Calu3 (cell line): ENCODE measurements at regions of chr5 and their contacts with region 1.

Region 1: GRCh38 chr5:88736494-88736893 is 146.5 kb downstream of the MEF2C start:
- DNase-seq: no peak
- H3K4me3 Mint-ChIP-seq: no peak overlapping the region
- H3K27ac Mint-ChIP-seq: no peak overlapping the region
- H3K4me1 Mint-ChIP-seq: no peaks in the 10 kb centered on the region
- H3K27me3 Mint-ChIP-seq: no peaks in the 10 kb centered on the region
- CTCF ChIP-seq: no peak

Region 2: DNA sequence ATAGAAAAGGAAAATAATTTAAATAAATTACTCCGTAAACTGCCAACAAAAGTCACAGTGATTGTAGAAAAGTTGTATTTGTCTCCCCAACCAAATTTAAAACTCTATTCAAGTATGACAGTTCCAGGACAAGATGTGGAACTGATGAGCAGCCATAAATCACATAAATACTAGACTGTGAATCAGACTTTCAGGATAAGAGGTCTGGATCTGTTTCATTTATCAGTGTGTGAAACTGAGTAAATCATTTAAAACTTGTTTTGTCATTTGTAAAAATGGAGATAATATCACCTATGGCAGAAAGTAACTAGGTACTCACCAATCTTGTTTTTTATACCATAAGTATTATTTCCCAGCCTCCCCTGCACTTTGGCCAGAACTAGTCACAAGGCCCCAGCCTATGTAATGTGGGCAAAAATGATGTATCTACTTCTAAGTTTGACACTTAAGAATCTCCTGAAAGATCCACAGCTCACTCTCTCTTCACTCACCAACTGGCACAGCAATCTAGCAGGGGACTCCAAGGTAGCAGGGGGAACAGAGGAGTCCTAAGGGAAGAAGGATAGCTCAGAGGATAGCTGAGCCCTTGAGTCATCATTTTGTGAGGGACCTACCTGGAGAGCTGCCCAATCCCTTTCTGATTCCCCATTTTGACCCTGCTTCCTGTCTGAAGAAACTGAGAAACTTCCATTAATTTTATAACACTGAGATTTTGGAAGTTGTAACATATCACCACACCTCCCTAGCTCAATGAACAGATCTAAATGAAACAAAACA is 499.4 kb before region 1 on chr5:
- CTCF ChIA-PET with region 1: no interaction called
- intact Hi-C with region 1: no loop called
- DNase-seq: no peak
- H3K4me3 Mint-ChIP-seq: no peak overlapping the region
- H3K27ac Mint-ChIP-seq: no peak overlapping the region
- H3K4me1 Mint-ChIP-seq: peaks cover 5% of the 10 kb centered on the region
- H3K27me3 Mint-ChIP-seq: no peaks in the 10 kb centered on the region
- CTCF ChIP-seq: no peak

Region 3: GRCh38 chr5:88536146-88536545 is 200.3 kb before region 1 on chr5:
- CTCF ChIA-PET with region 1: no interaction called
- intact Hi-C with region 1: no loop called
- DNase-seq: no peak
- H3K4me3 Mint-ChIP-seq: no peak overlapping the region
- H3K27ac Mint-ChIP-seq: no peak overlapping the region
- H3K4me1 Mint-ChIP-seq: no peaks in the 10 kb centered on the region
- H3K27me3 Mint-ChIP-seq: no peaks in the 10 kb centered on the region
- CTCF ChIP-seq: no peak

Region 4: DNA sequence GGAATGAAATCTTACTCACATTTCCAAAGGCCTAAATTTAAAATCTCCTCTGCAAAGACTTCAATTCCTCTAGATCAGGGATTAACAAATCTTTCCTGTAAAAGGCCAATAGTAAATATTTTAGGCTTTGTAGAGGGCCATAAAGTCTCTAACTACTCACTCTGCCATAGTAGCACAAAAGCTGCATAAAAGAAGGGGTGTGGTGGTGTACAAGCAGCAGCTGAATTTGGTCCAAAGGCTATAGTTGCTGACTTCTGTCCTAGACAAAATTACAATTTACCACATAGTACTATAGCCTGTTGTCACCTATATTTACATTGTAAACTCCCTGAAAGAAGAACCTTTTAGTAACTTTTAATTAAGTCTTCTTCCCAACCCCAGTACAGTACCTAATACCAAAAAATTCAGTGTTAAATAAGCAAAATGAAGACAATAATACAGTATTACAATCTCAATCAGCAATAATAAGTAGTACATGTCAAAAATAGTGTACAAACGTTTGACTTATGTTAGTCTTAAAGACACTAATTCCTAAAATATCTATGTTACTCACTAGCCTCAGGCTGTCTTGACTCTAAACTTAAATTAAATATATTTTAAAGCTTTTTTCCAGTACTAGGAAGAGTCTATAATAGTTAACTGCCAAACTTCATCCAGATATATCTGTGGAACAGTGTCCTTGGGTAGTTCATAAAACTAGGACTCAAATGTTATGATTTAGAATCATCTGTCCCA is 1666.2 kb after region 1 on chr5:
- CTCF ChIA-PET with region 1: no interaction called
- intact Hi-C with region 1: loop called (anchors 5 kb)
- DNase-seq: no peak
- H3K4me3 Mint-ChIP-seq: no peak overlapping the region
- H3K27ac Mint-ChIP-seq: no peak overlapping the region
- H3K4me1 Mint-ChIP-seq: peaks cover 25% of the 10 kb centered on the region
- H3K27me3 Mint-ChIP-seq: no peaks in the 10 kb centered on the region
- CTCF ChIP-seq: no peak